Right ventricle myocardium inferior (tissue), 1 donor: ENCODE measurements at regions of chr2 and their contacts with region 1.

Region 1: GRCh38 chr2:202375609-202376408 is at the start of gene BMPR2:
- DNase-seq: peak; percentile 92
- ATAC-seq: peak; percentile 92
- total RNA-seq, gene BMPR2: 45.3 TPM

Region 2: DNA sequence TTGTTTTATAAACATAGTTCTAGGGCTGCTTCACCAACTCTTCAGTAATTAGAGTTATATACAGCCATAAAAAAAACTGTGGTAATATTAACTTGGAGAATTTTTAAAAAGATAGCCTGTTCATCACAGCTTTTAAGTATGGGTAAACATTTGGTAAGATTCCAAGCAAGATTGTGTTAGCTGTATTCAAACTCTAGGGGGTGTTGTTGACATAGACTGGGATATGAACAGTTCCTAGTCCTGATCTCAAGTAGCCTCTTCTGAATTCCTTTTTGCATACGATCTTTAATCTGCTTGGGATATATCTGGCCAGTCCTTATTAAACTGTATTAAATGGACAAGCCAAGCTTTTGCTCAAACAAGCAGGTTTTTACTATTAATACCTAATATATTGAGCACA is 96.9 kb before region 1 on chr2:
- intact Hi-C with region 1: loop called (anchors 5 kb)
- DNase-seq: no peak
- ATAC-seq: peak; percentile 77

Region 3: DNA sequence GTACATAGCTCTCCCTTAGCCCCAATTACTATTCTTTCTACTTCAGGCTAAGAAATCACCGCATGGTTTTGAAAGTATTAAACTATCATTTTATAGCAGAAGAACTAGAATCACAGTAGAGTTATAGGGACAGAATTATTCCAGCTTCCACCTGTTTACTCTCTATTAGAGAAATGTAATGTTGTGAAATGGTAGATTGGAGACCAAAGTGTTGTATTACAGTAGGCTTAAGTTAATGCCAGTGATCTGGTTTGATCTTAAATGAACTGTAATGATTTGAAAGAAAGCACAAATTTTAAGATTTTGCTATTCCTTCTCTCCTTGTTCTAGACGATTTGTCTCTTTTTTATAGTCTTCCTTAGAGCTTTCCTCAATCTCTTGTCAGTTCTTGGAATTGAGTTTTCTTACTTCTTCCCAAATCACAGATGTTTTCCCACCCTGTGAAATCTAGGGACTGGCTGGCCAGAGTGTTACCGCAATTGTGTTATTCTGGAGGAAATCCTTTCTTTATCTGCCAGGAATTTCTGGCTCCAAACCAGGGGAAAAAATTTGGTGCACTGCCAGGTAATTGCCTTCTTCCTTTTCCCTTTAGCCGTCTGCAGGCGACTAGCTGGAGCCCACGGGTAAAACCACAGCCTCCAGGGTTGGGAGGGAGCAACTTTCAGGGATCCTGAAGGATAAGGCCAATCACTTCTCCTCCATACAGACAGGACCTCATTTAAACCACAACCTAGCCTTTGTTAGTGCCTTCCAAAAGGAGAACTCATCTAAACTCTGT is 58.5 kb before region 1 on chr2:
- intact Hi-C with region 1: loop called (anchors 2 kb)
- DNase-seq: no peak
- ATAC-seq: peak; percentile 81

Region 4: DNA sequence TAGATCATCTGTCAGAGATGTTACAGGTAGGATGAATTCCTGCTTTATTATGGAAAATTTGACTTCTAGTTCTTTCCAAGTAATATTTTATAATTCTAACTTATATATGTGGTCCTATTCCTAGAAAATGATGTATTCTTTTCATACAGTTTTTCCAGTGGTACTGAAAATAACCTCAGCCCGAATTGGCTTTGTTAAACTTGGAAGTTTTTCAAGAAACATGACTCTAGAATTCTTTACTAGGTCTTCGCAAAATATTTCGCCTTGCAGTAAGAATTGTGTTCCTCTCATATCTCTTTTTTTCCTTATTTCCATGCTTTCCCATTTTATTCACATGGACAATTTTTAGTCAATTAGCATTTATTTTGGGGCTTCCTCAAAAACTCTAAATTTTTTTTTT is 60.8 kb after region 1 on chr2:
- intact Hi-C with region 1: loop called (anchors 5 kb)
- DNase-seq: no peak
- ATAC-seq: no peak

Region 5: GRCh38 chr2:202494300-202495229 is 118.8 kb after region 1 on chr2:
- intact Hi-C with region 1: loop called (anchors 5 kb)
- DNase-seq: peak; percentile 68
- ATAC-seq: peak; percentile 48

Region 6: DNA sequence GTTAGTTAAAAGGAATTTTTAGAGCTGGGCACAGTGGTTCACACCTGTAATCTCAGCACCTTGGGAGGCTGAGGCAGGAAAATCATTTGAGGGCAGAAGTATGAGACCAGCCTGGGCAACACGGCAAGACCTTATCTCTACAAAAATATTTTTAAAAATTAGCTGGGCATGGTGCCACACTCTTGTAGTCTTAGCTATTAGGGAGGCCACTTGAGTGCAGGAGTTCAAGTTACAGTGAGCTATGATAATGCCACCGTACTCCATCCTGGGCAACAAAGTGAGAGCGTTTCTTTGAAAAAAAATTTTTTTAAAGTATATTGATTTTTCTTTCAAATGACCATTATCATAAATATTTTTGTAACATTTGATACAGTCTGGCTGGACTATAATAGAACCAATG is 165.3 kb after region 1 on chr2:
- intact Hi-C with region 1: loop called (anchors 5 kb)
- DNase-seq: no peak
- ATAC-seq: peak; percentile 82